T-cell (primary cell): ENCODE measurements at regions of chr7 and their contacts with region 1.

Region 1: DNA sequence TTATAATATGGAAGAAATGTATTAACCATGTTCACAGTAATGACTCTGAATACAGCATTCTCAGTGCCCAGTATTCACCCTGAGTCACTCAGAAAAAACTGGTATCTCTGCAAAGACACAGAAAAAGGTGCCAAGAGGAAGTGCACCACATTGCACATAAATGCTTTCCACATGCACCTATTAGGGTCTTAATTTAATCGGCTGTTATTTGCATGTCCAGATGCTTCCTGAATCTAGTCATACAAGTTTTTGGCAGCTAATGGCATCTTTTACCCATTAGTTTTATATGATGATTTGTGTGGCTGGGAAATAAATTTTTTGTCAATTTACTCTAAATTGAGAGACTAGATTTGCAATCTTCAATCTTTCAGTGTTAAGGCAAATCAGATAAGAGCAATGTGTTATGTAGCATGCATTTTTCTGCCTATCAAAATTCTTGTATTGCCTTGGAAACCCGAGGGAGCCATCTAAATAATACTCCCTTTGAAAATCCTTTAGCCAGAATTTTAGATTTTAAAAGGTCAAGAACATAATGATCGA is 58.2 kb downstream of the ZNF680 start:
- DNase-seq: no peak
- ATAC-seq: no peak
- H3K4me3 ChIP-seq: no peak overlapping the region
- H3K4me3 Mint-ChIP-seq: no peak overlapping the region
- H3K27ac ChIP-seq: no peak overlapping the region
- H3K27ac Mint-ChIP-seq: no peak overlapping the region
- H3K4me1 ChIP-seq: no peaks in the 10 kb centered on the region
- H3K4me1 Mint-ChIP-seq: no peaks in the 10 kb centered on the region
- H3K27me3 ChIP-seq: no peaks in the 10 kb centered on the region
- H3K27me3 Mint-ChIP-seq: no peaks in the 10 kb centered on the region

Region 2: DNA sequence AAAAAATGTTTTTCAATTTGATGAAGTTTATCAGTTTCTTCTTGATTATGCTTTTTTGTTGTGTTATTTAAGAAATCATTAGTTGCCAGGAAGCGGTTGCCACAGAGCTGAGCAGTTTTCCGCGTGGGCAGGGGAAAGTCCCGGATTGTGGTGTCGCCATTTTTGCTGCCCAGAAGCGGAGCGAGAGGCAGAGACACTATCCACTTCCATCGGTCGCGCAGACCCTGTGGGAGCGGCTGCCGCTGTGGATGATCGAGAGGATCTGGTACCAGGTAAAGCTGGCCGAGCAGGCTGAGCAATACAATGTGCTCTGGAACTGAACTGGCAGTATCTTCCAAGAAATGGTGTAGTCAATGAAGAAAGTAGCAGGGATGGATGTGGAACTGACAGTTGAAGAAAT is 71.1 kb before region 1 on chr7:
- CTCF ChIA-PET with region 1: no interaction called
- POLR2A ChIA-PET with region 1: no interaction called
- DNase-seq: no peak
- ATAC-seq: no peak
- H3K4me3 ChIP-seq: no peak overlapping the region
- H3K4me3 Mint-ChIP-seq: no peak overlapping the region
- H3K27ac ChIP-seq: no peak overlapping the region
- H3K27ac Mint-ChIP-seq: no peak overlapping the region
- H3K4me1 ChIP-seq: no peaks in the 10 kb centered on the region
- H3K4me1 Mint-ChIP-seq: no peaks in the 10 kb centered on the region
- H3K27me3 ChIP-seq: peaks cover 0 to 2% of the 10 kb centered on the region in 2 experiments
- H3K27me3 Mint-ChIP-seq: no peaks in the 10 kb centered on the region

Region 3: GRCh38 chr7:64485623-64486022 is 19.0 kb before region 1 on chr7:
- CTCF ChIA-PET with region 1: interaction called in 1 of 2 experiments, 12 read pairs
- POLR2A ChIA-PET with region 1: no interaction called
- DNase-seq: no peak
- ATAC-seq: no peak
- H3K4me3 ChIP-seq: no peak overlapping the region
- H3K4me3 Mint-ChIP-seq: no peak overlapping the region
- H3K27ac ChIP-seq: no peak overlapping the region
- H3K27ac Mint-ChIP-seq: no peak overlapping the region
- H3K4me1 ChIP-seq: no peaks in the 10 kb centered on the region
- H3K4me1 Mint-ChIP-seq: no peaks in the 10 kb centered on the region
- H3K27me3 ChIP-seq: no peaks in the 10 kb centered on the region
- H3K27me3 Mint-ChIP-seq: no peaks in the 10 kb centered on the region

Region 4: GRCh38 chr7:64581926-64582894 is 77.6 kb after region 1 on chr7:
- CTCF ChIA-PET with region 1: no interaction called
- POLR2A ChIA-PET with region 1: no interaction called
- DNase-seq: no peak
- ATAC-seq: no peak
- H3K4me3 ChIP-seq: no peak overlapping the region
- H3K4me3 Mint-ChIP-seq: no peak overlapping the region
- H3K27ac ChIP-seq: no peak overlapping the region
- H3K27ac Mint-ChIP-seq: no peak overlapping the region
- H3K4me1 ChIP-seq: no peaks in the 10 kb centered on the region
- H3K4me1 Mint-ChIP-seq: no peaks in the 10 kb centered on the region
- H3K27me3 ChIP-seq: no peaks in the 10 kb centered on the region
- H3K27me3 Mint-ChIP-seq: peaks cover 0 to 5% of the 10 kb centered on the region in 2 donors